HepG2 (cell line): ENCODE measurements at regions of chr15 and their contacts with region 1.

Region 1: GRCh38 chr15:72532991-72533601 is 59.0 kb downstream of the ARIH1 start:
- DNase-seq: peak; percentile 12
- ATAC-seq: peak; percentile 74
- H3K4me3 ChIP-seq: no peak overlapping the region
- H3K27ac ChIP-seq: no peak overlapping the region
- H3K4me1 ChIP-seq: no peaks in the 10 kb centered on the region
- H3K27me3 ChIP-seq: no peaks in the 10 kb centered on the region
- CTCF ChIP-seq: peak; percentile 67
- EP300 ChIP-seq: no peak
- POLR2A ChIP-seq: no peak
- RAD21 ChIP-seq: no peak

Region 2: DNA sequence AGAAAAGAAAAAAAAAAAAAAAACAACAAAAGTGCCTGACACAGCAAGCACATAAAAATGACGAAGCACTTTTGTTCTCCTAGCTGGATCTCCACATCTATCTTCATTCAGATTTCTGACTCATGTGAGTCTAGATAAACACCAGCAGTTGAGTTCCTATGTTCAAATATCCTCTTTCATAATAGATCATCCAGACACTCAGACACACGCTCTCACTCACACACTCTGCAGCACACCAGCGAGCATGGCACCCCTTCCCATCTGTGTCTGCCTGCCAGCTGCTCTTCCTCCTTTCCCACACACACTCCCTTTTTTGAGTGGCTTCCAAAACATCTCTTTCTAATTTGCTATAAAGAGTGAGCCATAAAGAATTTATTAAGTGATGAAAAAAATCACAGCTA is 193.3 kb before region 1 on chr15:
- CTCF ChIA-PET with region 1: no interaction called
- POLR2A ChIA-PET with region 1: no interaction called
- in situ Hi-C with region 1: no loop called
- intact Hi-C with region 1: loop called (anchors 10 kb)
- DNase-seq: peak; percentile 47
- ATAC-seq: peak; percentile 55
- H3K4me3 ChIP-seq: no peak overlapping the region
- H3K27ac ChIP-seq: no peak overlapping the region
- H3K4me1 ChIP-seq: peaks cover 9% of the 10 kb centered on the region; the same call in 1 of the 2 replicates
- H3K27me3 ChIP-seq: no peaks in the 10 kb centered on the region
- CTCF ChIP-seq: no peak
- EP300 ChIP-seq: no peak
- POLR2A ChIP-seq: no peak
- RAD21 ChIP-seq: no peak

Region 3: DNA sequence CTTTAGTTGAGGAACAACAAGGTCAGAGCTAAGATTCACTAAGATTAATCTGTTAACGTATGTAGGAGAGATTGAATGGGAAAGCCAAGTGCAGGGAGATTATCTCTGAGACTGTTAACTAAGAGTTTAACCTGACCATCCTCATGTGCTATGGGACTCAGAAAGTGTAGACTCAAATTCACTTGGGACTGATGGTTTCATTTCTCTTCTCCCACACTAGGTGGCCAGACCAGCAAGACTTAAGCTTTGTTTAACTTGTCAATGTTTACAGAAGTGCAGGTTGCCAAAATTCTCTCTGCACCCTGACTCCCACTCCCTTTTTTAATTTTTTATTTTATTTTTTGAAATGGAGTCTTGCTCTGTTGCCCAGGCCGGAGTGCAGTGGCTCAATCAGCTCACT is 150.9 kb before region 1 on chr15:
- CTCF ChIA-PET with region 1: no interaction called
- POLR2A ChIA-PET with region 1: no interaction called
- in situ Hi-C with region 1: no loop called
- intact Hi-C with region 1: loop called (anchors 1 kb)
- DNase-seq: peak; percentile 29
- ATAC-seq: peak; percentile 68; the same call in 2 of the 3 replicates
- H3K4me3 ChIP-seq: no peak overlapping the region
- H3K27ac ChIP-seq: no peak overlapping the region
- H3K4me1 ChIP-seq: peaks cover 23% of the 10 kb centered on the region
- H3K27me3 ChIP-seq: peaks cover 0 to 9% of the 10 kb centered on the region in 2 experiments; a peak in 1 of 5 replicates
- CTCF ChIP-seq: peak; percentile 28
- EP300 ChIP-seq: no peak
- POLR2A ChIP-seq: no peak
- RAD21 ChIP-seq: no peak

Region 4: DNA sequence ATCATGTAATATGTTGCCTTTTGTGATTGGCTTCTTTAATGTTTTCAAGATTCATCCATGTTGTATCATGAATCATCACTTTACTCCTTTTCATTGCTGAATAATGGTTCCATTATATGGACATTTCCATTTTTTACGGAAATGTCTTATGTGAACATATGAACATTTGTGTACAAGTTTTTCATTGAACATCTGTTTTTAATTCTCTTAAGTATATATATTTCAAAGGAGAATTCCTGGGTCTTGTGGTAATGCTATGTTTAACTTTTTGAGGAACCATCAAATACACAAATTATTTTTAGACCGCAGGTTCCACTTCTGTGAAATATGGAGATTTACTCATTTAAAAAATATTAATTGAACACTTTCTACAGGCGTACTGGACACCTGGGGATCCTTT is 26.7 kb after region 1 on chr15:
- CTCF ChIA-PET with region 1: no interaction called
- POLR2A ChIA-PET with region 1: no interaction called
- in situ Hi-C with region 1: no loop called
- intact Hi-C with region 1: no loop called
- DNase-seq: no peak
- ATAC-seq: no peak
- H3K4me3 ChIP-seq: no peak overlapping the region
- H3K27ac ChIP-seq: no peak overlapping the region
- H3K4me1 ChIP-seq: peaks cover 6% of the 10 kb centered on the region
- H3K27me3 ChIP-seq: no peaks in the 10 kb centered on the region
- CTCF ChIP-seq: no peak
- EP300 ChIP-seq: no peak
- POLR2A ChIP-seq: no peak
- RAD21 ChIP-seq: no peak

Region 5: DNA sequence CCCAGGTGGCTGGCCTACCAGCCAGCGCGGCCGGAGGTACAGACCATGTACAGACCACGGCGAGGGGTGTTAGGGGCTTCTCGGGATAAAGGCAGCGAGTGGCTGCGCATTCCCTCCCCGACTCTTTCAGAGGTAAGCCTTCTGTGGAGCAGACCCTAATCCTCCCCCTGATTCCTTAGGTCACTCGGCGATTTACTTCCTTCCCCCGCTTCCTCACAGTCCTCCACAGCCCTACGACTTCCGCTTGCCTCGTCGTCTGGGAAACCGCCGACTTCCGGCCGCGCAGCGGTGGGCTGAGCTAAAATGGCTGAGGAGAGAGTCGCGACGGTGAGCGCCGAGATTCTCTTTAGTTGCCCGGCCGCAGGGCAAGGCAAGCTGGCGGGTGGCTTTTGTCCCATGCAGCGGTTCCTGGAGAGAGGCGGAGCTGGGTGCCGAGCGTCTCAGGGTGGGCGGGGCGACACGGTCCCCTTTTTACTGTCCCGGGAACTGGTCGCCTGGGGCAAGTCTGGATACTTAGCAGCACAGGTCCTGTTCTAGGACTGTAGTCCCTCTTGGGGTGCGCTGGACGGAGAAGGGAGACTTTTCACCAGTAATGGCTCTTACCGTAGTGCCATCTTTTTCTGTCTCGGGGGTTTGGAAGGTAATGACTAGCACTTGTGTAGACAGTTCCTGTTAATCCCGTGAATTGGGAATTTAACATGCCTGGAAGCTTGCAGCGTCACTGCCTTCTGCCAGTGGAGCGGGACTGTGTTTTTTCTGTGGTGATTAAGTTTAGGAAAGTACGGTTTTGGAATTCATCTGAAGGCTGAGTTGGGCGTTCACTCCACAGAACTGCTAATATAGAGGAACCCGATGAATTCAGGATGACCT is 153.1 kb after region 1 on chr15 and contains the starts of genes BBS4 and HIGD2B:
- CTCF ChIA-PET with region 1: no interaction called
- POLR2A ChIA-PET with region 1: no interaction called
- in situ Hi-C with region 1: no loop called
- intact Hi-C with region 1: no loop called
- DNase-seq: peak; percentile 87
- ATAC-seq: peak; percentile 98
- H3K4me3 ChIP-seq: peak within 1 kb of the TSS; percentile 68 to 98 (median 90)
- H3K27ac ChIP-seq: peak within 1 kb of the TSS; percentile 91
- H3K4me1 ChIP-seq: peaks cover 11% of the 10 kb centered on the region; the same call in 1 of the 2 replicates
- H3K27me3 ChIP-seq: no peaks in the 10 kb centered on the region; a peak in 2 of 5 replicates
- CTCF ChIP-seq: no peak
- EP300 ChIP-seq: no peak
- POLR2A ChIP-seq: peak; percentile 83 to 92
- RAD21 ChIP-seq: no peak
- total RNA-seq, gene BBS4: 16.0 and 17.4 TPM in 2 replicates
- total RNA-seq, gene HIGD2B: not detected in 2 replicates